OCI-LY7 (cell line): ENCODE measurements at regions of chr12 and their contacts with region 1.

Region 1: DNA sequence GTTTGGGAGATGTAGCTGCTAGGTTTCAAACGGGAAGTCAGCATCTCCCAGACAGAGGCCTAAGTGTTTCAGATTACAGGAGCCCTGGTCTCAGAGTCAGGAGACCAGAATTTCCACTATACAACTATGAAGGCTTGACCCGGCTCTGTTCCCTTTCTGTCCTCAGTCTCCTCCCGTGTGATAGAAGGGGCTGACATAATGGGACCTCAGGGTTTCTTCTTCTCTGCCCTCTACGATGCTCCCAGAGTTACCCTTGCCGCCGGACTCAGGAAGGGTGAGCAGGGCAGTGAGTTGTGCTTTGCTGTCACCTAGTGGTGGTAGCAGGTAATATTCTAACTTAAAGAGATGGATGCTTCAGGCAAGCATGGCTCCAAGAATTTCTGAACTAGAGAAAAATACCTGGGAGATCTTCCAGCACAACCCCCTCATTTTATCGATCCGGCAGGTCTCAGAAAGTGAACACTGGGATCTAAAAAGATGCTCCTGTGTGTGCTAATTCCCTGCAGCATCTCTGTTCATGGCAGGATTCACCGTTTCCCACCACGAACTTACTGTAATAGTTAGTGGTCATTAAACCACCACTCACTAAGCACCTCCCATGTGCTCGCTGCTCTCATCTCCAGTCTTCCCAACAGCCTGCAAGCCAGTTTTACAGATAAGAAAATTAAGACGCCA is 84.4 kb downstream of the VWF start:
- DNase-seq: peak; percentile 72
- H3K4me3 ChIP-seq: no peak overlapping the region
- H3K27ac ChIP-seq: no peak overlapping the region
- H3K4me1 ChIP-seq: no peaks in the 10 kb centered on the region
- CTCF ChIP-seq: peak; percentile 96

Region 2: GRCh38 chr12:5965950-5966383 is 74.1 kb before region 1 on chr12:
- CTCF ChIA-PET with region 1: no interaction called
- POLR2A ChIA-PET with region 1: no interaction called
- intact Hi-C with region 1: loop called (anchors 5 kb)
- DNase-seq: peak; percentile 57
- H3K4me3 ChIP-seq: no peak overlapping the region
- H3K27ac ChIP-seq: no peak overlapping the region
- H3K4me1 ChIP-seq: no peaks in the 10 kb centered on the region
- CTCF ChIP-seq: peak; percentile 88